Motor neuron (in vitro differentiated cells): ENCODE measurements at regions of chr10 and their contacts with region 1.

Region 1: DNA sequence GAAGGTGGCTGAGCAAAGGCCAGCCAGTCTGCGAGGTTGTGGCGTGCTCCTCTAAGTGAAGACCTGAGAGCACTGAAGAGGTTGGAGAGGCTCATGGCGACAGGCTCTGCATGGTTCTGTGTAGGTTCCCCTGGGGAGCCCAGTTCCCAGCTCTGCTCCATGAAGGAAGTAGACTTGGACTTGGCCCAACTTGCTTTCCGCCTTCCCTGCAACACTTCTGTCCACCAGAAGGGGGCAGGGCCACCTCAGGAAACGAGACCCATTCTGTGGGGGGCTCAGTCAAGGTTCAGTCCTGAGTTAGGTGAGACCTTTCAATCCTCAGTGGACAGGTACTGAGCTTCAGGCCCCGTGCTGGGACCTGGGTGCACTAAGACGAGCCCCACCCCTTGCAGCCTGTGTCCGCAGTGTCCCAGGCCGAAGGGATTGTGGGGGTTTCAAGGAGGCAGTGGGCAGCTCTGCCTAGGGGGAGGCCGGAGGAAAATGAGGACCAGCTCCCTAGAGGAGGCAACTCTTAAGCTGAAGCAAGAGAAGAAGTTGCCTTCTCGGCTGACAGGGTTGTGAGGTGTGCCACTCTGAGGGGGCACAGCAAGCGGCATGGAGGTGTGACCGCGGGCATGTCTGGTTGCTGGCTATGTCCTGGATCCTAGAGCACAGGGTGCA is 15.0 kb upstream of the PCBD1 start:
- ATAC-seq: peak; percentile 37 to 84 (median 59)
- H3K4me3 ChIP-seq: no peak overlapping the region
- H3K27ac ChIP-seq: no peak overlapping the region
- H3K4me1 ChIP-seq: peaks cover 10 to 13% of the 10 kb centered on the region in 2 donors

Region 2: DNA sequence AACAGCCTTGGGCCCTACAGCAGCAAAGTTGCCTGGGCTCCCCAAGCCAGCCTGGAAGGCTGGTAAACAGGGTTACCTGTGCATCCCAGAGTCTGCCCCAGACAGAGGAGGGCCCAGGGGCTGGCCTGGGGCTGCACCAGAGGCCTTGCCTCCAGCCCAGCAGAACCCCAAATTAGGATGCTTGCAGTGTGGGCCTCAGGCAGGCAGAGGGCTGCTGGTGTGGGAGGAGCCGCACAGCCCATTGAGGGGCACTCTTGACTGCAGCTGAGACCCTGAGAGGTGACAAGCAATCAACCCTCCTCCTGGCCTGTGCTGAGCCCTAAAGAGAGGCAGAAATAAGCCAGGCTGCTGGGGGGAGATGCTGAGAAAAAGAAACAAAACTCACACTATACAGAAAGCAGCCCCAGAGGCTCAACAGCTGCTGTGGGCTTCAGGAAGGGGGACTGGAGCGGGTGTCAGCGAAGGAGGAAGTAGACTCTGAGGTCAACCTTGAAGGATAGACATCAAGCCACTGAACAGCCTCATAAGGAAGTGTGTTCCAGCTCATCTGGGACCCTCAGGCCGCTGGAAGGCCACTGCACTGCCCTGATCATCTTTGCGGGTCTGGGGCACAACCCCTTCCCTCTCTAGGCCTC is 777.4 kb before region 1 on chr10:
- in situ Hi-C with region 1: no loop called
- ATAC-seq: peak in 1 of 8 experiments; percentile 18
- H3K4me3 ChIP-seq: no peak overlapping the region
- H3K27ac ChIP-seq: no peak overlapping the region
- H3K4me1 ChIP-seq: no peaks in the 10 kb centered on the region

Region 3: DNA sequence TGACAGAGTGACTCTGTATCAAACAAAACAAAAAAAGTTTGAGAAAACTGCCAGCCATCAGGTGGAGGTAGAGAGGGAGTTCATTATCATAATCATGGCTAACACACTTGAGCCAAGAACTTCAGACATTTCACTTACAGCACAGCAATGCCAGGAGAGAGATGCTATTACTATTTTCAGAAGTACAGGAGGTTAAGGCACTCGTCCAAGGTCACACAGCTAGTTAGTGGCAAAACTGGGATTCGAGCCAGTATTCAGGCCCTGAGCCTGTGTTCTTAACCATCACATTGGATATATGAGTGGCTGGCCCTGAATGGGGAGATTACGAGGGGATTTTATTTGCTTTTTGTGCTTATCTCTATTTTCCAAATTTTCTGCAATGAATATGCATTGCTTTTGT is 284.2 kb after region 1 on chr10:
- in situ Hi-C with region 1: loop called in 1 of 9 experiments (anchors 25 kb)
- ATAC-seq: no peak
- H3K4me3 ChIP-seq: no peak overlapping the region
- H3K27ac ChIP-seq: no peak overlapping the region
- H3K4me1 ChIP-seq: peaks cover 0 to 3% of the 10 kb centered on the region in 2 donors

Region 4: DNA sequence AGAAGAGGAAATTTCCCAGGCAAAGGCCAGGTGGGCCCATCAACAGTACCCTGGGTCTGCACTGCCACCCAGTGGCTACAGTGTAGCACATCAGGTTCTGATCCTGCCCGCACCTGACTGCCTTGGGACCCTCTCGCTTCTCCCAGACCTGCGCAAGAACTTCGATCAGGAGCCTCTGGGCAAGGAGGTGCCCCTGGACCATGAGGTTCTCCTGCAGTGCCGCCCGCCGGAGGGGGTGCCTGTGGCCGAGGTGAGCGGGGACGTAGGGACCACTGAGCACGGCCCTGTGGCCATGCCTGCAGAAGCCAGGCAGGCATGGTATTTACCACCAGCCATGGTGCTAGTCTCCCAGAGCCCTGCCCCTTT is 381.8 kb after region 1 on chr10:
- in situ Hi-C with region 1: loop called (anchors 10 to 25 kb)
- ATAC-seq: peak; percentile 21 to 95 (median 60)
- H3K4me3 ChIP-seq: no peak overlapping the region
- H3K27ac ChIP-seq: no peak overlapping the region
- H3K4me1 ChIP-seq: peaks cover 10 to 19% of the 10 kb centered on the region in 2 donors